ENCODE measurements at regions of chr1 and their contacts with region 1.

Region 1: DNA sequence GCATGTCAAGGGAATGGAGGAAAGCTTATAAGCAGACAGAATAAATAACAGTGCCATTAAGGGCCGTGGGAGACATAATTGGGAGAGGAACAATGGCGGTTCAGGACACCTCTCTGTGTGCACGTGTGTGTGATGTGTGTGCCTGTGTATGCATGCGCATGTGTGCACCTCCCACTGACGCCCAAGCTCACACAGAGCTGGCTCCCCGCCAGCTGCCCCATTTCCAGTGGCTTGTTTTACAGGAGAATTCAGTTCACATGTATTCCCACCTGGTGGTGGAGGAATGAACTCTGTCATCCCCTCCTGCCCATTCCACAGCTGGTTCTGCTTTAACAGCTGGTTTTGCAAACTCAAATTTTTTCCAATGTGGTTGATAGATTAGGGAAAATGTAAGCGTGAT is 262.2 kb downstream of the AJAP1 start:
- DNase-seq: no peak
- ATAC-seq: no peak

Region 2: DNA sequence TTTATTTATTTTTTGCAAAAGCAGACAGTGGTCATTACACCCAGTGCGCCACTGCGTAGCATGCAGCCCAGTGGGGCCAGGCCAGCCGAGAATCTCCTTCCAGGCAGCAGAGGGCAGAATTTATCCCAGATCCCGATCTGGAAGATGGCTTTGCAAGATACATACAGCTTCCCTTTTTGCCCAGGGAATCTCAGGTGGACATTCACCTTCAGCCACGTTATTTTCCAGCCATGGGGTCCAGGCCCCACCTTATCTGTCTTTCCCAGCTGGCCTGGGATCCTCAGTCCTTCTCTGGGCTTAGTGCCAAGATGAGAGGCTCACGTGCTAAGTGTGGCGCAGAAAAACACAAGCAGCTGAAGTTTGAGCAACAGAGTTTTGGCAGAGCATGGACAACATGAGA is 138.6 kb before region 1 on chr1:
- intact Hi-C with region 1: no loop called
- DNase-seq: no peak
- ATAC-seq: no peak

Region 3: DNA sequence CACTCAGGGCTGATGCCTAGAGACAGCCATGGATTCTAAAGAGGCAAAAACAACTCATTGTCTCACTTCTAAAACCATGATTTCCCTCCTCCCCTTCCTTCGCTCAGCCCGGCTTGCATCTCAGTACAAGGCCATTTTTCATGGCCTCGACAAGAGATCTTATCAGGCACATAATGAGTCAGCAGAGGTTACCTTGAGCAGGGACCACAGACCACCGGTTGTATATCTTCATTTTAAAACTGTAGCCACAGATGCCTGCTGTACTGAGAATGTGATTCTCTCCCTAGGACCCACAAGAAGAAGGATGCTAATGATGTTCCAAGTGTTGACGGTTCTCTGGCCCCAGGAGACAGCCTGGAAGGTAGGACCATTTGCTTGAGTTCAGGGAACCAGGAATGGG is 69.7 kb after region 1 on chr1:
- intact Hi-C with region 1: loop called in 1 of 2 experiments (anchors 5 kb)
- DNase-seq: no peak
- ATAC-seq: no peak